Activated CD8-positive, alpha-beta T cell treated with anti-CD3 and anti-CD28 coated beads for 36 hours (primary cell): ENCODE measurements at regions of chr14 and their contacts with region 1.

Region 1: DNA sequence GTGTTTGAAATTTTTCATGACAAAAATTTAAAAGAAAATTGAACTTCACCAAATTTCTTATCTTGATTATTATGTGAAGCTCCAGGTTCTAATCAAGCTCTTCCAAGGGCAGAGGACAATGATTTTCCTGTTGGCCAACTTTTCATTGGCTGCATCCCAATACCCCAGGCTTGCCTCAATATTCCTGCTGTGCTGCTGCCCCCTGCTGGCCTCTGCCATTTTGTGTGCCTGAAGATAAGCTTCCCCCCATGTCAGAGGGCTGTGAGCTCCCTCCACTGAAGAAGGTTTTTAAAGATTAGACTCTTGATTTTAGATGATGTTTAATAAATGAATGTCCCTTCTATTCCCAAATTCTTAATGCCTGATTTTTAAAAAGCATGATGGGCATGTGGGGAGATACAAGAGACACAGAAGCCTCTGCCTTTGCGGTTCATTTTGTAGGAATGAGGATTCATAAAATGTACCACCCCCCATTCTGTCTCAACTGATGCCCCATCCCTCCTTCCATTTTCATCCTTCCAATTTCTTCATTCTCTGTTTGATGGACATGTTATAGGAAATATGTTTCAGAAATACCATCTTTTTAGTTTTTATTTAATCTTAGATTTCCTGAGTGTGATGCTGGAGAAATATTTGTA is 76.7 kb upstream of the RGS6 start:
- DNase-seq: peak; percentile 77
- ATAC-seq: no peak
- H3K4me3 Mint-ChIP-seq: no peak overlapping the region
- H3K27ac Mint-ChIP-seq: no peak overlapping the region
- H3K4me1 Mint-ChIP-seq: peaks cover 8% of the 10 kb centered on the region
- H3K27me3 Mint-ChIP-seq: peaks cover 37% of the 10 kb centered on the region
- CTCF ChIP-seq: peak; percentile 86

Region 2: GRCh38 chr14:71758229-71758951 is 97.1 kb before region 1 on chr14:
- CTCF ChIA-PET with region 1: interaction called, 12 read pairs
- POLR2A ChIA-PET with region 1: no interaction called
- intact Hi-C with region 1: no loop called
- DNase-seq: no peak
- ATAC-seq: no peak
- H3K4me3 Mint-ChIP-seq: no peak overlapping the region
- H3K27ac Mint-ChIP-seq: no peak overlapping the region
- H3K4me1 Mint-ChIP-seq: no peaks in the 10 kb centered on the region
- H3K27me3 Mint-ChIP-seq: peaks cover 3% of the 10 kb centered on the region
- CTCF ChIP-seq: no peak

Region 3: DNA sequence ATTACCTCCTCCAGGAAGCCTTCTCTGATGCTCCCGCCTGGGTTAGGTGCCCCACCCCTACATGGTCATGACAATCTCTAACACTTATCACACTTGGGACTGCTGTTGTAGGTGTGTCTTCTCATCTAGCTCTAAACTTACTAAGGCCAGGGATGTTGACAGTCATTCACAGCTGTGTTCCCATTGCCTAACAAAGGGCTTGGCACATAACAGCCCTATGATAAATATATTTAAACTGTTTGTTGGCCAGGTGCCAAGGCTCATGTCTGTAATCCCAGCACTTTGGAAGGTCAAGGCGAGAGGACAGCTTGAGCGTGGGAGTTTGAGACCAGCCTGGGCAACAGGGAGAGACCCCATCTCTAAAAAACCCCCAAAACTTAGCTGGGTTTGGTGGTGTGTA is 22.0 kb before region 1 on chr14:
- CTCF ChIA-PET with region 1: interaction called, 14 read pairs
- POLR2A ChIA-PET with region 1: no interaction called
- intact Hi-C with region 1: no loop called
- DNase-seq: no peak
- ATAC-seq: no peak
- H3K4me3 Mint-ChIP-seq: no peak overlapping the region
- H3K27ac Mint-ChIP-seq: no peak overlapping the region
- H3K4me1 Mint-ChIP-seq: no peaks in the 10 kb centered on the region
- H3K27me3 Mint-ChIP-seq: peaks cover 4% of the 10 kb centered on the region
- CTCF ChIP-seq: no peak

Region 4: DNA sequence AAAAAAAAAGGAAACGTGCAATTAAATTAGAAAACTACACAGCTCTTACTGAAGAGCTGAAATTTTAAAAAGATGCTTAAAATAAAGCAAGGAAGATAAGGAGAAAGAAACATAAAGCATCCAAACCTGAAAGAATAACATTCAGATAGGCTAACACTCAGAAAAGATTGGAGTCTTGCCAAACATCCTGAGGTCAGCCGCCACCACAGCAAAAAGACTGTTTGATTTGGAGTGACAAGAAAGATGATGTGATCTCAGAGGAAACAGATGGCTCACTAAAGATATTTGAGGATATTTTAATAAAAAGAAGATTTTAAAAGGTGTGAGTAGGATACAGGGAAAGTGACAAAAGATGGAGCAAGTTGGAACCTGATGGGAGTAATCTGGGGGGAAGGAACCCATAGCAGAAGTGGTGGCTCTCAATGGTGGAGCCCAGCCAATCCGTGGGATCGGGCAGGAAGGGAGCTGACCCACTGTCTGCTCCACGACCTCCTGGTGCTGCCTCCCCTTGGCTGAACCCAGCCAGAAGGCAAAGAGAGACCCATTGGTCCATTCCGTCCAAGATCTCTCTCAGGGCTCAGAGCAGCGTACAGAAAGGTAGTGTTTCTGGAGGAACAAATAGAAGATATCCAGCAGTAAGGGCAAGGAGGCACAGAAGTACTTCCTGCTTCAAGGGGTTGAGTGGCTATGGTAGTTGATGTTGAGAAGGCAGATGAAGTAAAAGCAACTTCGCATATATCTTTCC is 546.3 kb after region 1 on chr14:
- CTCF ChIA-PET with region 1: no interaction called
- POLR2A ChIA-PET with region 1: no interaction called
- intact Hi-C with region 1: no loop called
- DNase-seq: peak; percentile 56
- ATAC-seq: no peak
- H3K4me3 Mint-ChIP-seq: no peak overlapping the region
- H3K27ac Mint-ChIP-seq: no peak overlapping the region
- H3K4me1 Mint-ChIP-seq: peaks cover 8% of the 10 kb centered on the region
- H3K27me3 Mint-ChIP-seq: peaks cover 35% of the 10 kb centered on the region
- CTCF ChIP-seq: no peak